Thyroid gland (tissue), 4 donors: ENCODE measurements at regions of chr1 and their contacts with region 1.

Region 1: DNA sequence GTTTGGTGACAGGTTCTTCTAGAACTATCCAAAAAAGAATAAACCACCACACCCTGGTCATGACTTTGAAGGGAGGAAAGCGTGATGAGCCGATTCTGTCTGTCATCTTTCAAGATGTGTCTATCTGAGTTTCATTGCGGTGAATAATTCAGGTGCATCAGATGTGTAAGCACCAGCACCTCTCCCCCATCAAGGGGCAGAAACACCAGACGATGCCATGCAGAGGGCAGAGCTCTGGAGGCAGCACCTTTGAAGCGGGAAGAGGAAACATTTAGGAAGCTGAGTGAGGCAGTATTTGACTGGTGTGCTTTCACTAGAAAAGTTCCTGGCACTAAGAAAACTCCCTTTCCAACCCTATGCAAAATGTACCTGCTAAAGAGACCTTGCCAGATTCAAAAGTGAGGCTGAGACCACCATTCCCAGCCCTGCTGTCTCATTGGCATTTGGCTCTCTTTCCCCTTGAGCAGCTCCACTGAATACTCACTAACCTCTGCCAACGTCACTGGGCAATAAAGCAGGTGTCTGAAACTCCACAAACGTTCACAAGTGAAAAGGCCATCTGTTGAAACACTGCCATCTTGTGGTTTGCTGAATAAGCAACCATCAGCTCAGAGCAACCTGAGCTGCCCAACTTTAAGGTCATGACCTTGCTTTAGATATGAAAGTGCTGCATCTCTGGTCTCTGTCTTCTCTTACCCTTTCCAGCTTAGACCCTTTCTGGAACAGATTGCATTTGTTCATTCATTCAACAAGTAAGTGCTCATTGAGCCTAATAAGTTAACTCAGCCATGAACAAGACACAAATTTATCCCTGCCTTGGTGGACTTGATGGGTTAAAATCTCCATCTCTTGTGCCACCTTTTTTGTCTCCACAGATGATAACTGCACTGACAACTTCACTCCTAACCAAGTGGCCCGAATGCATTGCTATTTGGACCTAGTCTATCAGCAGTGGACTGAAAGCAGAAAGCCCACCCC is 228.6 kb downstream of the PAPPA2 start:
- DNase-seq: peak; percentile 43 to 47
- H3K4me3 ChIP-seq: no peak overlapping the region
- H3K27ac ChIP-seq: no peak overlapping the region
- H3K4me1 ChIP-seq: peaks cover 0 to 7% of the 10 kb centered on the region in 2 donors
- H3K27me3 ChIP-seq: no peaks in the 10 kb centered on the region
- CTCF ChIP-seq: peak; percentile 27 to 73 (median 52)
- POLR2A ChIP-seq: no peak

Region 2: GRCh38 chr1:176374967-176375569 is 316.5 kb before region 1 on chr1:
- intact Hi-C with region 1: loop called (anchors 10 kb)
- DNase-seq: peak; percentile 77 to 87
- H3K4me3 ChIP-seq: no peak overlapping the region
- H3K27ac ChIP-seq: no peak overlapping the region
- H3K4me1 ChIP-seq: no peaks in the 10 kb centered on the region
- H3K27me3 ChIP-seq: no peaks in the 10 kb centered on the region
- CTCF ChIP-seq: peak; percentile 54 to 82 (median 71)
- POLR2A ChIP-seq: no peak

Region 3: DNA sequence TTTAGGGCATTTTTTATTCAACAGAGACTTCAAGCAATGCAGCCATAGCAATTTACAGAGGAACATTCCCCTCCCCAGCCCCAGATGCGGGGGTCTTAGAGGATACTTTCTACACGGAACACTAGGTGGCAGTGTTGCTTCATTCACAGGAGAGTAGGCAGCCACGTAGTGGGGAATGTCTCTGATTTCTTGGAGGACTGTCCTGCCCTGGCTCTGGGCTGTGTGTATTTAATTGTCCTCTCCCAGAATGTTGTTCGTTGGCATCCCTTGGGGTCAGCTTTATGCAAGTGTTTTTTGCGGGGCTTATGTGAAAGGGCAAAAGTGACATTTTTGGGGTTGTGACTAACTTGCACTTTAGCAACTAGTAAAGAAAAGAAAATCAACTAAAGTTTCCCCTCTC is 131.7 kb before region 1 on chr1:
- intact Hi-C with region 1: loop called (anchors 5 kb)
- DNase-seq: peak; percentile 44 to 51
- H3K4me3 ChIP-seq: no peak overlapping the region
- H3K27ac ChIP-seq: no peak overlapping the region
- H3K4me1 ChIP-seq: no peaks in the 10 kb centered on the region
- H3K27me3 ChIP-seq: no peaks in the 10 kb centered on the region
- CTCF ChIP-seq: peak; percentile 50 to 87 (median 73)
- POLR2A ChIP-seq: no peak

Region 4: DNA sequence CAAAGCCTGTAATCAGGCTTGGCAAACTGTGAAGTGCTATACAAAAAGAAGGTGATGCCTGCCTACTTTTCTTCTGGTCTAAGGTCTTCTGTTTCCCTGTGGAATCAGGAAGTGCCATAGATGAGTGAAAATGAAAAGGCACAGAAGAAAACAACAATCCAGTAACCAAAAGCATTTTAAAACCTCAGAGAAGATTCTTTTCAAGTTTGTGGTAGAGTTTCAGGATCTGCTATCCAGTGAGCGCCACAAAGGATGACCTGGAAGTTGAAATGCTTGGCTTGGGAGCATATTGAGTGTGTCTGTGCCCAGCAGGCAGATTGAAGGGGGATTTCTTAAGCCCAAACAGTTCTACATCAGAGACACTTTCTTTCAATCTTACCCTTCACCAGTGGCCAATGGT is 43.7 kb after region 1 on chr1:
- intact Hi-C with region 1: no loop called
- DNase-seq: no peak
- H3K4me3 ChIP-seq: no peak overlapping the region
- H3K27ac ChIP-seq: no peak overlapping the region
- H3K4me1 ChIP-seq: no peaks in the 10 kb centered on the region
- H3K27me3 ChIP-seq: no peaks in the 10 kb centered on the region
- CTCF ChIP-seq: no peak
- POLR2A ChIP-seq: no peak

Region 5: DNA sequence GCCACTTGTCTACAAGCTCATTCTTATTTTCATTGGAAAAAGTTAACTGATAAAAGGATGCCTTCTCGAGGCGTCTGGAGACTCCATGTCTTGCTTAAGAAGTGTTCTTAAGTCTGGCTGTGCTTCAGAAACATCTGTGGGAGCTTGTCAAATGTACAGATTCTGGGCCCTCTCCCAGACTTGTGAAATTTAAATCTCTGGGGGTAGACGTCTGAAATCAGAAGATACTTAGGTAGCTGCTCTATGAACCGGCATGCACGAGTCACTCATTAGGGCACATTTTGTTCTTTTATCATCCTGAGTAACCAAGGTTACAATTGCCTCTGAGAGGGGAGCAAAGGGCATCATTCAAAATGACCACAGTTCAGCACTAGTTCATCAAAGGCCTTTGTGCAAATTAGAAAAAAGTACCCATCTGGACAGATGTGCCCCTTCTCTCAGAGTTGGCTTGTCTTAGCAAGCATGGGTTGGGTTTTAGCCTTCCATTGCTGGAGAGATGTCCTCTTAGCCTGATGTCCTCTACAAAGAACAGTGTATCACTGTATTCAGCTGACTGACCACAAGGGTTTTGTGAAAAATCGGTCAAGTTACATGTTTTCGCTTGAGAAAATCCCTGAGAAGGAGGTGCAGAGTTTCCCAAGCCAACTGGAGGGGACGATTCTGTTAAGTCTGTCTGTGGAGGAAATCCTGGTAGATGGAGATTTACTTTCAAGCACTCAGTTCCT is 316.1 kb after region 1 on chr1:
- intact Hi-C with region 1: no loop called
- DNase-seq: no peak
- H3K4me3 ChIP-seq: no peak overlapping the region
- H3K27ac ChIP-seq: no peak overlapping the region
- H3K4me1 ChIP-seq: peaks cover 0 to 3% of the 10 kb centered on the region in 2 donors
- H3K27me3 ChIP-seq: no peaks in the 10 kb centered on the region
- CTCF ChIP-seq: no peak
- POLR2A ChIP-seq: no peak